Naive thymus-derived CD4-positive, alpha-beta T cell (primary cell): ENCODE measurements at regions of chr5 and their contacts with region 1.

Region 1: GRCh38 chr5:157820593-157821252 is 38.2 kb downstream of the CLINT1 start:
- DNase-seq: peak in 7 of 9 donors; percentile 5 to 45 (median 32)
- ATAC-seq: peak; percentile 55
- H3K4me3 ChIP-seq: no peak overlapping the region
- H3K4me3 Mint-ChIP-seq: no peak overlapping the region
- H3K27ac ChIP-seq: no peak overlapping the region
- H3K27ac Mint-ChIP-seq: peak overlapping the region in 6 of 9 donors; percentile 0 to 84 (median 40)
- H3K4me1 ChIP-seq: peaks cover 0 to 8% of the 10 kb centered on the region in 2 donors
- H3K4me1 Mint-ChIP-seq: peaks cover 15 to 52% (median 41%) of the 10 kb centered on the region in 7 donors
- H3K27me3 ChIP-seq: no peaks in the 10 kb centered on the region
- H3K27me3 Mint-ChIP-seq: no peaks in the 10 kb centered on the region

Region 2: GRCh38 chr5:157917899-157918809 is 97.4 kb after region 1 on chr5:
- CTCF ChIA-PET with region 1: interaction called, 3 read pairs
- POLR2A ChIA-PET with region 1: no interaction called
- intact Hi-C with region 1: loop called (anchors 1 kb)
- DNase-seq: peak; percentile 11 to 56 (median 22)
- ATAC-seq: peak; percentile 75
- H3K4me3 ChIP-seq: no peak overlapping the region
- H3K4me3 Mint-ChIP-seq: peak overlapping the region in 9 of 10 donors; percentile 7 to 87 (median 71)
- H3K27ac ChIP-seq: peak overlapping the region; percentile 31
- H3K27ac Mint-ChIP-seq: peak overlapping the region; percentile 40 to 90 (median 83)
- H3K4me1 ChIP-seq: peaks cover 5 to 11% of the 10 kb centered on the region in 2 donors
- H3K4me1 Mint-ChIP-seq: peaks cover 17 to 30% (median 28%) of the 10 kb centered on the region in 7 donors
- H3K27me3 ChIP-seq: no peaks in the 10 kb centered on the region
- H3K27me3 Mint-ChIP-seq: no peaks in the 10 kb centered on the region

Region 3: DNA sequence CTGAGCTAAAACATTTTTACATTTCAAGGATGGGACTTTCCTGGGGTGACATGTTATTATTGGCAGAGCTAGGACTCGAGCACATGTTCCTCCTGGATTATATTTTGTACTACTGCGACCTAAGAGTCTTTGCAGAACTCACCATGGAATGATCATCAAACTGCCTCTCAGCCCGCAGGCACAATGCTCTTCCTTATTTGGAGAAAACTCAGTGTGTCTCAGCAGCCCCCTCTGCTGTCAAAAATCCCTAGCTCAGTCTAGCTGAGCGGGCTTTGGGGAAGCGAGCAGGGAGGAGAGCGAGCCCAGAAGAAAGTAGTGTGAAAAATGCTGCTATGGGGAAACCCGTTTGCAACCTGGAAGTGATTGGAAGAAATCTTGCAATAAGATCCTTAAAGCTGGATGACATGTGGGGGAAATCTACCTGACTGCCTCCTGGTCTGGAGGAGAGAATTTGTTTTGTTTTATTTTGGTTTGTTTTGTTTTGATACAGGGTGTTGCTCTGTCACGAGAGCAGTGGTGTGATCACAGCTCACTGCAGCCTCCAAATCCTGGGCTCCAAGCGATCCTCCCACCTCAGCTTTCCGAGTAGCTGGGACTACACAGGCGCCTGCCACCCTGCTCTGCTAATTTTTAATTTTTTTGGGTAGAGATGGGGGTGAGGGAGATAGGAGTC is 128.2 kb after region 1 on chr5:
- CTCF ChIA-PET with region 1: interaction called, 36 read pairs
- POLR2A ChIA-PET with region 1: interaction called, 3 read pairs
- intact Hi-C with region 1: loop called (anchors 1 kb)
- DNase-seq: peak; percentile 44 to 78 (median 69)
- ATAC-seq: peak; percentile 97
- H3K4me3 ChIP-seq: no peak overlapping the region
- H3K4me3 Mint-ChIP-seq: peak overlapping the region in 4 of 10 donors; percentile 1 to 44 (median 4)
- H3K27ac ChIP-seq: no peak overlapping the region
- H3K27ac Mint-ChIP-seq: no peak overlapping the region
- H3K4me1 ChIP-seq: no peaks in the 10 kb centered on the region
- H3K4me1 Mint-ChIP-seq: peaks cover 5 to 10% (median 6%) of the 10 kb centered on the region in 7 donors
- H3K27me3 ChIP-seq: no peaks in the 10 kb centered on the region
- H3K27me3 Mint-ChIP-seq: peaks cover 5 to 27% (median 9%) of the 10 kb centered on the region in 5 donors

Region 4: DNA sequence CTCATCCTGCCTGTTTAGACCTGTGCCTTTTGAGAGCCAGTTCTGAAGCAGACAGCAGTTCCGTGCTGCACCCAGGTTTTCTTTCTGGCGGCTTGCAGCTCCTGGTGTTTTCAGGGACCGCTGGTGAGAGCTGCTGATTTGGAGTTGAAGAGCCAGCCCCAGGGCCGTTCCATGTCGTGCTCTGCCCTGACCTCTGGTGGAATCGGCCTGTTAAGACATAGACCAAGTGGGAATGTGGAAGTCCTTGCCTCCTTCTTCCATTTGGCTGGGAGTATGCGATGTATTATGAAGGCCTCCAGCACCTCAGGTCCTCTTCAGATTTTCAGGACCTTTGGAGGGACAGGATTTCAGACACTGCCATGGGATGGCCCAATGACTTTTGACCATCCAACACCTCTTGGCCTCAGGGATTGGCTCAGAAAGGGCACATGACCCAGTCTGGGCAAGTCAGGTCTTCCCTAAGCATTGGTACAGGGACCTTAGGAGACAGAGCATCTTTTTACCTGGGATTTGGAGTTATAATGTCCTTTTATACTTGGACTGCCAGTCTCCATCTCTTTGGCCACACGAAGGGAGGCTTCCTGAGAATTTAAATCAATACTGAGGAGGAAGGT is 174.3 kb after region 1 on chr5:
- CTCF ChIA-PET with region 1: interaction called, 6 read pairs
- POLR2A ChIA-PET with region 1: no interaction called
- intact Hi-C with region 1: loop called (anchors 1 kb)
- DNase-seq: peak; percentile 5 to 52 (median 31)
- ATAC-seq: peak; percentile 84
- H3K4me3 ChIP-seq: no peak overlapping the region
- H3K4me3 Mint-ChIP-seq: peak overlapping the region in 9 of 10 donors; percentile 29 to 77 (median 61)
- H3K27ac ChIP-seq: no peak overlapping the region
- H3K27ac Mint-ChIP-seq: no peak overlapping the region
- H3K4me1 ChIP-seq: peaks cover 14 to 16% of the 10 kb centered on the region in 2 donors
- H3K4me1 Mint-ChIP-seq: peaks cover 8 to 20% (median 12%) of the 10 kb centered on the region in 7 donors
- H3K27me3 ChIP-seq: peaks cover 0 to 3% of the 10 kb centered on the region in 2 donors
- H3K27me3 Mint-ChIP-seq: peaks cover 13 to 56% (median 20%) of the 10 kb centered on the region in 5 donors

Region 5: DNA sequence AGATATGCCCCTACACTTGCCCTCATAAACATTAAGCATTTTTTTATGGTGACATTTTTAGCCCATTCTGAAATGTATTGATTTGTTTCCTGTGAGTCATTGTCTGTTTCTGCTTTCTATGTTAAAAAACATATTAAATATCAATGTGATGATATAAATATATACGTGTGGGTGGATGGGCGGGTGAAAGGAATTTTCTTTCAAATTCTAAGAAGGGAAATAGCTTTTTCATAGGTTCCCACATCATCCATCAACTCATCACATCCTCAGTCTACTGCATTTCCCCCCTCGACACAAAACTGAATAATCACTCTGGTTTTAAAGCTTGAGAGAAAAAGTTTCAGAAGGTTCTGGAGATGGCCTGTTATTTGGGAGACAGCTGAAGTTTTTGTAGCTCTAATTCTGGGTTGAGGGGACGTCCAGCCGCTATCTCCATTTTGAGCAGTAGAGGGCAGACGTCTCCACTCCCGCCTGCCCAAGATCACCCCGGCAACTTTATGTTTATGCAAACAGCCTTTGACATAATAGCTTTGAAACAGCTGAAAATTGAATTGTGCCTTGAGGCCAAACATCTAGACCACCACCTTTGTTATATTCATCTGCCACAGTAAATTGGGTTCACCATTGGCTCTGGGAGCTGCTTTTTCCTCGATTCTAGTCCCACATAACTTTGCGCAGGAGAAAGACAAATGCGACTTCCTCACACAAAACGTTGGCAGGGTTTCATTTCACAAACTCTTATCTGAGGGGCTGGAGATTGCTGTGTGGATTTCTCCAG is 254.5 kb after region 1 on chr5:
- CTCF ChIA-PET with region 1: no interaction called
- POLR2A ChIA-PET with region 1: no interaction called
- intact Hi-C with region 1: loop called (anchors 2 kb)
- DNase-seq: peak; percentile 7 to 63 (median 42)
- ATAC-seq: peak; percentile 83
- H3K4me3 ChIP-seq: no peak overlapping the region
- H3K4me3 Mint-ChIP-seq: peak overlapping the region in 3 of 10 donors; percentile 9 to 38 (median 37)
- H3K27ac ChIP-seq: no peak overlapping the region
- H3K27ac Mint-ChIP-seq: peak overlapping the region in 4 of 9 donors; percentile 39 to 61 (median 42)
- H3K4me1 ChIP-seq: no peaks in the 10 kb centered on the region
- H3K4me1 Mint-ChIP-seq: peaks cover 0 to 5% (median 4%) of the 10 kb centered on the region in 7 donors
- H3K27me3 ChIP-seq: no peaks in the 10 kb centered on the region
- H3K27me3 Mint-ChIP-seq: peaks cover 0 to 27% (median 10%) of the 10 kb centered on the region in 5 donors

Region 6: DNA sequence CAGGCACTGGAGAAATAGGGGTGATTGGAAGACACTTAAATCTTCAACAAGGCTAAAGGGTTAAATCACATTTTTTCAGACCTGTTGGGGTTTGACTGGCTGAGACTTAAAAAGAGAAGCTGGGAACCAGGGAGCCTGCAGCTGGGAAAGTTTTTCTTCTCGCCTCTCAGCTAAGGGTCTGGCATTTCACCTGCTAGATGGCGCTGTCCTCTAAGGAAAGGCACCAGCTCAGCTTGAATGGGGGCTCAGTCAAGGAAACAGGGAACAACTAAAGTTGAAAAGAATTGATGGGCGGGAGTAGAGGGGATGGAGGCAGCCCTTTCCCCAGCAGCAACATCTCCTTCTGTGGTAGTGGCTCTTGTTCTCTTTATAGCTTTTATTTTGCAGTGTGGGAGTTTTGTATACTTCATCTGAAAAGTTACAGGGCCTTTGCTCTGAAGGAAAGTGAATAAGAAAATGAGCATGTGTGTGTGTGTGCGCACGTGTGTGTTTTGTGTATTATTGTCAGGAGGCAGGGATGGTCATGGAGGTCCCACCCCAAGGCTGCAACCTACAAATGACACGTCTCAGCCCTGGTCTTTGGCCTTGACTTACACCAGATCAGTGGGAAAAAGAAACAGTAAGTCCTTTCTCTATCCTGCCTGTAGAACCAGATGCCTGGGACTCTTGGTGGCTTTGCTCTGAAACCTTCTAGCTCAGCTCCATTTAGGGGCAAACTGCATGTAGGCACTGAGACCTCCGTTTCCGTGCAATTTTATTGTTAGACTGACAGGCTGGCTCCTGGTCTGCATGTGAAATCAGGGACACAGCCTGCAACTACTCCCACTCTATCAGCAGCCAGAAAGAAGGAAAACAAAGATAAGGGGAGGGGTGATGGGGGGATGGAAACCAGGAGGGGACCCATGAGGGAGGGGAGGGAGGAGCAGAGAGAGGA is 354.5 kb after region 1 on chr5:
- CTCF ChIA-PET with region 1: no interaction called
- POLR2A ChIA-PET with region 1: no interaction called
- intact Hi-C with region 1: loop called (anchors 1 to 10 kb)
- DNase-seq: peak; percentile 11 to 58 (median 46)
- ATAC-seq: peak; percentile 65
- H3K4me3 ChIP-seq: no peak overlapping the region
- H3K4me3 Mint-ChIP-seq: no peak overlapping the region
- H3K27ac ChIP-seq: no peak overlapping the region
- H3K27ac Mint-ChIP-seq: peak overlapping the region in 1 of 9 donors; percentile 41
- H3K4me1 ChIP-seq: no peaks in the 10 kb centered on the region
- H3K4me1 Mint-ChIP-seq: peaks cover 0 to 5% (median 0%) of the 10 kb centered on the region in 7 donors
- H3K27me3 ChIP-seq: no peaks in the 10 kb centered on the region
- H3K27me3 Mint-ChIP-seq: peaks cover 0 to 10% (median 4%) of the 10 kb centered on the region in 5 donors